ENCODE measurements at regions of chr14 and their contacts with region 1.

Region 1: GRCh38 chr14:90513161-90514014 is 116.6 kb downstream of the CALM1 start:
- DNase-seq: peak; percentile 90 to 100 (median 95)

Region 2: DNA sequence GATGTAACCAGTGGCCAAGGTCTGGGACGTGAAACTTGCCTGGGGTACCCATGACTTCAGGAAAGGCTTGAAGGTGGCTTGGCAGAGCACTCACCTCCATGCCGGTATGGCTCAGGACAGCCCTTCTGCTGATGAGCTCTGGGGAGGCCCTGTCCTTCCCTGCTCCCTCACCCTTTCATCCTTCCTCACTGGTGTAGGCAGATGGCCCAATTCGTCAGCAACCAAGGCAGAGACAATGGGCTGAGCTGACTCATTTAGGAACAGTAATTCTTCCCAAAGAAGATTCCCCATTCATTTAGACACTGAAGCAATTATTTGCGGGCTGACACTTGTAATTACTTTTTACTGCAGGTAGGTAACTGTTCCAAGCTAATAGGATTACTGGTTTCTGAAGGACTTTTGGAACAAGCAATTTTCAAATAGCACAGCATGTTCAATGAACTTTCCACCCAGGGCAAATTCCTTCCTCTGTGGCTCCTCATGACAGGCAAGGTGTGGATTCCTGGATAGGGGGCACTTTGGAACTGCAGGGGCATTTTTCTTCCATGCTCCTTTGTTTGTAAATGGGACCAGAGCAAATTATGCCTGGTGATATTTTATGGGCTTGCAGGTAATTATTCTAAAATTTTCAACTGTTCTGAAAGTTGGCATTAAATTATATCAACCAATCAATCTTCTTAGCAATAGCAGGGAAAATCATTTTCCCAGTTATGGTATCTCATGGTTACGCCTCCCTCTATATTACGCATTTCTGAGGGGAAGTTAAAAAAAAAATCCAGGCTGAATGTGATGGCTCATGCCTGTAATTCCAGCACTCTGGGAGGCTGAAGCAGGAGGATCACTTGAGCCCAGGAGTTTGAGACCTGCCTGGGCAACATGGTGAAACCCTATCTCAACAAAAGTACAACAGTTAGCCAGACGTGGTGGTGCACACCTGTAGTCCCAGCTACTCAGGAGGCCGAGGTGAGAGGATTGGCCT is 157.6 kb before region 1 on chr14:
- intact Hi-C with region 1: no loop called
- DNase-seq: no peak

Region 3: GRCh38 chr14:90409209-90409730 is 104.1 kb before region 1 on chr14:
- intact Hi-C with region 1: loop called (anchors 5 kb)
- DNase-seq: peak in 3 of 10 donors; percentile 48 to 92 (median 58)

Region 4: DNA sequence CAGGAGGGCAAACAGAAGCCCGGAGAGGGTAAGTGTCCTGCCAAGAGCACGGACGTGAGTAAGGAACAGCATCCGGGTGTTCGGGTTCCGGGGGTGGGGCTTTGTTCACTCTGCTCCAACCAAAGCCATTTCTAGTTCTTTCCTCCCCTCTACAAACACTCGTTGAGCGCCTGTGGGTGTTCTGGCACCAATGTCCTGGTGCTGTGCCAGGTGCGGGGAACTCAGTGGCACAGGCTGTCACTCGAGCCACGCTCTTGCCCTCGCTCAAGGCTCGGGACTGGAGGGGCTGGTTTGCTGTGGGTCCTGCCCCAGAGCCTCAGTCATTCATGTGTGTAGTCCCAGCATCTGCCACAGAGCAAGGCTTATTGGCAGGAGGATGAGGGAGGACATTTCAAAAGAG is 41.0 kb after region 1 on chr14:
- intact Hi-C with region 1: loop called (anchors 1 kb)
- DNase-seq: peak; percentile 72 to 98 (median 88)

Region 5: GRCh38 chr14:90567991-90568390 is 54.6 kb after region 1 on chr14:
- intact Hi-C with region 1: loop called (anchors 1 kb)
- DNase-seq: peak; percentile 50 to 93 (median 64)

Region 6: GRCh38 chr14:90645842-90646443 is 132.6 kb after region 1 on chr14:
- intact Hi-C with region 1: no loop called
- DNase-seq: no peak